Sigmoid colon (tissue), 7 donors: ENCODE measurements at regions of chr19 and their contacts with region 1.

Region 1: DNA sequence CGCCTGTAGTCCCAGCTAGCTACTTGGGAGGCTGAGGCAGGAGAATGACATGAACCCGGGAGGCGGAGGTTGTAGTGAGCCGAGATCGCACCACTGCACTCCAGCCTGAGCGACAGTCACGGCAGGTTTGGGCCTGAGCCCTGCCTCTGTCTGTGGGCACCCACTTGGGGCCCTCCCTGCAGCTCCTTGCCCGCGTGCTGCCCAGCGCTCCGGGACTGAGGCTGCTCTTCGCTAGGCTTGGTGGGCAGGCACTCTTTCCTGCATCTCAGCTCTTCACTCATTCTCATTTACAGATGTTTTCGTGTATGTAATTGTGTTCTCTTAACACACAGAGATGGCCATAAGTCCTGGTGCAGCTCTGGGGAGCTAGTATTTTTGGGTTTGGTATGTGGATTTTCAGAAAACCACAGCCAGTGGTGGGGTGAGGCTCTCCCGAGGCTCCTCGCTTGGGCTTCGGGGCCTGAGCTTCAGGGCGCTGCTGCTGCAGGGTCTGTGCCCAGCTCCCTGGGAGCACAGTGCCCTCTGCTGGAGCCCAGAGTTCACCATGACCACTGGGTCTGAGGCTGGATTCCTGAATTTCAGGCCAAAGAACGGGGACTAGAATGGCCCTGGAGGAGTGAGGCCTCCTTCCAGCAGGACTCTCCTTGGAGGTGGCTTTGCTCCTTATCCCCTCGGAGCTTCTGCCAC is 15.2 kb downstream of the UPF1 start:
- DNase-seq: peak; percentile 91
- H3K4me3 ChIP-seq: no peak overlapping the region
- H3K27ac ChIP-seq: peak overlapping the region; percentile 69 to 74 (median 71)
- H3K4me1 ChIP-seq: peaks cover 0 to 83% (median 59%) of the 10 kb centered on the region in 4 donors
- H3K27me3 ChIP-seq: no peaks in the 10 kb centered on the region
- CTCF ChIP-seq: peak; percentile 70 to 84 (median 78)
- EP300 ChIP-seq: no peak
- POLR2A ChIP-seq: no peak

Region 2: DNA sequence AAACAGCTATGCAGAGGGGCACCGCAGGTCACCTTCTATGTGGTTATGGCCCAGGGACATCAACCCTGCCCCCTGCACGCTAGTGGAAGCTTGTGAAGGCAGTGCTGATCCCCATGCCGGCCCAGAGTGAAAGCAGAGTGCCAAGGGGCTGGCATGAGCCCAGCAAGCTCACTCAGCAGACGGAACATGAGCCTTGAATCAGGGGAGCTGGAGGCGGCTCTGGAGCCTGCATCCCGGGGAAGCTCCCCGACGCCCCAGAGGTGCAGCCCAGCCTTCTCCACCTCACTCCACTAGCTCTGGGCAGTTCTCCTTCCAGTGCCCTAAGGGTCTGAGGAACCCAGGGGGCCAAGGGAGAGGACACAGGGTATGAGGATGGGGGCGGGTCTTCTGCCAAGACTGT is 390.0 kb before region 1 on chr19:
- intact Hi-C with region 1: loop called (anchors 5 kb)
- DNase-seq: peak; percentile 93
- H3K4me3 ChIP-seq: no peak overlapping the region
- H3K27ac ChIP-seq: peak overlapping the region; percentile 67 to 92 (median 87)
- H3K4me1 ChIP-seq: peaks cover 0 to 58% (median 49%) of the 10 kb centered on the region in 4 donors
- H3K27me3 ChIP-seq: no peaks in the 10 kb centered on the region
- CTCF ChIP-seq: no peak
- EP300 ChIP-seq: no peak
- POLR2A ChIP-seq: no peak

Region 3: GRCh38 chr19:18594096-18594823 is 252.7 kb before region 1 on chr19:
- intact Hi-C with region 1: loop called (anchors 1 kb)
- DNase-seq: peak; percentile 90
- H3K4me3 ChIP-seq: peak overlapping the region; percentile 18 to 44 (median 38)
- H3K27ac ChIP-seq: peak overlapping the region in 2 of 4 donors; percentile 45 to 47
- H3K4me1 ChIP-seq: peaks cover 0 to 34% (median 33%) of the 10 kb centered on the region in 4 donors
- H3K27me3 ChIP-seq: peaks cover 12 to 38% (median 23%) of the 10 kb centered on the region in 3 donors
- CTCF ChIP-seq: peak in 3 of 4 experiments; percentile 39 to 94 (median 54)
- EP300 ChIP-seq: no peak
- POLR2A ChIP-seq: no peak

Region 4: DNA sequence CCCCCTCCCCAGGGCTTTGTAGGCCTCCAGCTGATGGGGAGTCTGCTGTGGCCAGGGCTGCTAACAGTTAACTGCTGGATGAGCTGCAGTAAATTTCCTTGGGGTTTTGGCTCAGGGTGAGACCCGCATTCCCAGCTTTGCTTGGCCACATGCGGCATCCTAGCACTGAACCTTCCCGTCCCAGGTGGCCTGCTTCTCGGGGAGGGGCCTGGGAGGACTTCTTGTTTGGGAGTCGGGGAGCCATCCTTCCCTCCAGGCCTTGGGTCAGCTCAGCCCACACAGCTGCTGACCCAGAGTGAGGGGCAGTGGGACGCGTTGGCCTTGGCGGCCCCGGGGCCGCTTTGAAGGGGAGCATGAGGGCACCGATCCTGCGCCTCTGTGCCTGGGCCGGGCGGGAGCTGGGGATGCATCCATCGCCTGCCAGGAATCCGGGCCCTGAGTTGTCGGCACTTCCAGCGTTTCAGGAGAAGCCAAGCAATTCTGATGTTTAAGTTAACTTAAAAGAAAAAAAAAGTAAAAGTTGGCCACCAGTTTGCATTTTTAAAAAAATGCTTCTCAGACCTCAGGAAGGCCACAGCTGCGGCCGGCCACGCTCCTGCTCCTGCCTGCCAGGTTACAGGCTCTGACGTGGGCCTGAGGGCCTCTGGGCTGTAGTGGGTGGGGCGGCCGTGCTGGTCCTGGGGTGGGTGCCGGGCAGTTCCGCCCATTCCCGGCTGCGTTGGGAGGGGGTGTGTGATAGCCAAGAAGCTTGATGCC is 135.8 kb before region 1 on chr19:
- intact Hi-C with region 1: loop called (anchors 10 kb)
- DNase-seq: peak; percentile 88
- H3K4me3 ChIP-seq: no peak overlapping the region
- H3K27ac ChIP-seq: peak overlapping the region in 1 of 4 donors; percentile 55
- H3K4me1 ChIP-seq: peaks cover 0 to 21% (median 12%) of the 10 kb centered on the region in 4 donors
- H3K27me3 ChIP-seq: no peaks in the 10 kb centered on the region
- CTCF ChIP-seq: no peak
- EP300 ChIP-seq: no peak
- POLR2A ChIP-seq: no peak

Region 5: DNA sequence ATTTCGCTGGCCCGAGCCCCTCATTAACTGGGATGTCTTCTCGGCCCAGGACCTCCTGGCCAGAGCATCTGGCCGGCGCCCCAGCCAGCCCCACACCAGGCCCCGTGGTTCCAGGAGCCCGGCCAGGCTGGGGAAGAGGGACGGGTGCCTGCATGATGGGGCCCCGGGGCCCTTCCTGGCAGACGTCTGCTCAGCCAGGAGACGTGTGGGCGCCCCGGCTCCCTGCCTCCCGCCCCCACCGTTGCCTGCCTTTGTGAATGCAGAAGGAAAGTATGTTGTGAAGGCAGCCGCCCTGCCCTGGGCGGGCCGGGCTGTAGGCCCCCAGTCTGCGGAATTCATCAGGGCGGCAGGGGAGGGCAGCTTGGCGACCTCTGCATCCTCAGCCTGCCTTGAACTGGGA is 51.5 kb before region 1 on chr19:
- intact Hi-C with region 1: no loop called
- DNase-seq: no peak
- H3K4me3 ChIP-seq: no peak overlapping the region
- H3K27ac ChIP-seq: no peak overlapping the region
- H3K4me1 ChIP-seq: peaks cover 0 to 14% (median 9%) of the 10 kb centered on the region in 4 donors
- H3K27me3 ChIP-seq: peaks cover 18 to 91% (median 50%) of the 10 kb centered on the region in 3 donors
- CTCF ChIP-seq: no peak
- EP300 ChIP-seq: no peak
- POLR2A ChIP-seq: no peak